ENCODE measurements at regions of chr6 and their contacts with region 1.

Region 1: DNA sequence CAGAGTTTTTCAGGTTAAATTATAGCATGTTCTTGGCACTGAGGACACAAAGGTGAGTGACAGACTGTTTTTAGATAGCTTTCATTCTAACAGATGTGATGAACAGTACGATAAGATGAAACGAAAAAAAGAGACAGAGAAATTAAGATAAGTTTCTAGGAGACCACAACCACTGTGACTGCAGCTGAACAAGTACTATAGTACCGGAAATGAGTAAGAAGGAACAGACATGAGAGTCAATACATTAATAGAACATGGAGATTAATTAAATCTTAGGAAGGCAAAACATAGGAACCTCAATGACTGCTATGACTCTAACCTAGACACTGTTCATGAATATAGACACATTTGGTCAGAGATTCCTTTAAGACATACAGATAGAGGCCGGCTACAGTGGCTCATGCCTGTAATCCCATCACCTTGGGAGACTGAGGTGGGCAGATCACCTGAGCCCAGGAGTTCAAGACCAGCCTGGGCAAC is 40.2 kb downstream of the HBS1L start:
- DNase-seq: peak; percentile 17
- H3K4me3 Mint-ChIP-seq: peak overlapping the region; percentile 32
- H3K27ac Mint-ChIP-seq: peak overlapping the region; percentile 70
- H3K4me1 Mint-ChIP-seq: peaks cover 48% of the 10 kb centered on the region
- H3K27me3 Mint-ChIP-seq: no peaks in the 10 kb centered on the region

Region 2: DNA sequence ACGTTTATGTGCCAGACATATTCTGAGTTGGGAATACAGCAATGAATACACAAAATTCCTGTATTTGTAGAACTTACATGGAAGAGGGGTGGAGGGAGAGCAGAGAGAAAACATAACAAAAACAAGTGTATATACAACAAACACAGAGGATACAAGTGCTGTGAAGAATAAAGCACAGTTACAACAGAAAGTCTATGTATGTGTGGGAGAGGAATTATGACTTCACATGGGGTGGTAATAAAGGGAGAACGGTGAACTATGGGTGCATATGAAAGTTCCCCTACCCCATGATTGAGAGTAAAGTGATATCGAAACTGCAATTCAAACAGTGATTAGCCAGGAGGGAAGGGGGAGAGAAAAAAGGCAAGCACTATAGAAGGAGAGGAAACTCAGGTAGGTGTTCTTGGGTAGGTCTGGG is 15.7 kb after region 1 on chr6:
- CTCF ChIA-PET with region 1: no interaction called
- POLR2A ChIA-PET with region 1: no interaction called
- intact Hi-C with region 1: loop called (anchors 1 kb)
- DNase-seq: no peak
- H3K4me3 Mint-ChIP-seq: peak overlapping the region; percentile 0
- H3K27ac Mint-ChIP-seq: peak overlapping the region; percentile 52
- H3K4me1 Mint-ChIP-seq: peaks cover 58% of the 10 kb centered on the region
- H3K27me3 Mint-ChIP-seq: no peaks in the 10 kb centered on the region

Region 3: GRCh38 chr6:135054569-135055498 is 40.4 kb after region 1 on chr6 and contains the start of gene HBS1L:
- CTCF ChIA-PET with region 1: no interaction called
- POLR2A ChIA-PET with region 1: interaction called, 4 read pairs
- intact Hi-C with region 1: loop called (anchors 2 kb)
- DNase-seq: peak; percentile 98
- H3K4me3 Mint-ChIP-seq: peak within 1 kb of the TSS; percentile 92
- H3K27ac Mint-ChIP-seq: peak within 1 kb of the TSS; percentile 96
- H3K4me1 Mint-ChIP-seq: peaks cover 34% of the 10 kb centered on the region
- H3K27me3 Mint-ChIP-seq: no peaks in the 10 kb centered on the region
- total RNA-seq, gene HBS1L: 117 to 123 TPM

Region 4: DNA sequence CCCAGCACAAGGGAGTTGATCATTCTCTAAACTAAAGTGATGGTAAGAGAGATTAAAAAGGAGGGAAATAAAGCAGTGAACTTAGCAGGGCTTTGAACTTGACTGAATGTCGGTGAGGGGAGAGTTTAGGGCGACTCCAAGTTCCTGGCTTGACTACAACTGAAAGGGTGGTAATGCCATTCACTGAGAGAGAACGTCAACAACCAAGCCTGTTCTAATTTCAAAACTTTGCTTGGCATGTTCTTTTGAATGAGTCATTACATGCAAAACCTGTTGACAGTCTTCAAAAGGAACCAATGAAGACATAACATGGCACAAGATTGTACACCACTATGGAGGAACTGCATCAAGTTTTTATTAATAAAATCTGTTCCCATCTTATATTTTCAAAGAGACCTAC is 156.5 kb after region 1 on chr6:
- CTCF ChIA-PET with region 1: no interaction called
- POLR2A ChIA-PET with region 1: no interaction called
- intact Hi-C with region 1: loop called (anchors 1 kb)
- DNase-seq: peak; percentile 63
- H3K4me3 Mint-ChIP-seq: peak overlapping the region; percentile 17
- H3K27ac Mint-ChIP-seq: peak overlapping the region; percentile 87
- H3K4me1 Mint-ChIP-seq: peaks cover 16% of the 10 kb centered on the region
- H3K27me3 Mint-ChIP-seq: no peaks in the 10 kb centered on the region

Region 5: DNA sequence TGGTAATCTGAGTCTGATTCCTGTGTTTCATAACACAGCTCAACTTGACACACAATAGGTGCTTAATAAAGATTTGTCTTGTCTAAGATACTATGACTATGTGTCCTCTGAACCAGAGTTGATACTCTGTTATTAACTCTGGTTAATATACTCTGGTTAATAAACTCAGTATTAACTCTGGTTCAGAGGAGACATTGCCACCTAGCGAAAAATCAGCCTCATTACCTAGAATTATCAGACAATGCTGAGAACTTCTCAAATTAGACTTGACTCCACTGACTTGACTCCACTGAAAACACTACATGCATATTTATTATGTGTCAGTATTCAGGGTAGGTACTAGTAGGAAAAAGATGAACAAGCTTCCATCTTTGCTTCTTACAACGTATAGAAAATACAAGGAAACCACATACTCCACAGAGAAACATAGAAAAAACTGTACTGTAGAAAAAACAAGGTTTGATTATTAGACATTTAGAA is 409.3 kb after region 1 on chr6:
- CTCF ChIA-PET with region 1: no interaction called
- POLR2A ChIA-PET with region 1: no interaction called
- intact Hi-C with region 1: loop called (anchors 10 kb)
- DNase-seq: no peak
- H3K4me3 Mint-ChIP-seq: no peak overlapping the region
- H3K27ac Mint-ChIP-seq: no peak overlapping the region
- H3K4me1 Mint-ChIP-seq: peaks cover 4% of the 10 kb centered on the region
- H3K27me3 Mint-ChIP-seq: no peaks in the 10 kb centered on the region